ENCODE measurements at regions of chr14 and their contacts with region 1.

Region 1: GRCh38 chr14:100900837-100901390 is 2.6 kb downstream of the RTL1 start:
- DNase-seq: peak; percentile 81
- H3K4me3 ChIP-seq: peak overlapping the region in 1 of 2 experiments; percentile 48; a peak in 2 of 4 replicates
- H3K27ac ChIP-seq: peak overlapping the region in 1 of 2 experiments; percentile 99; a peak in 2 of 4 replicates
- H3K4me1 ChIP-seq: peaks cover 0 to 79% of the 10 kb centered on the region in 2 experiments; a peak in 3 of 4 replicates
- H3K27me3 ChIP-seq: peaks cover 6% of the 10 kb centered on the region; the same call in 1 of the 2 replicates
- CTCF ChIP-seq: peak; percentile 46
- EP300 ChIP-seq: no peak
- RAD21 ChIP-seq: peak; percentile 88

Region 2: GRCh38 chr14:100422556-100423404 is 478.1 kb before region 1 on chr14:
- CTCF ChIA-PET with region 1: interaction called, 11 read pairs
- POLR2A ChIA-PET with region 1: interaction called, 14 read pairs
- DNase-seq: no peak
- H3K4me3 ChIP-seq: no peak overlapping the region
- H3K27ac ChIP-seq: peak overlapping the region; percentile 82 to 100
- H3K4me1 ChIP-seq: peaks cover 26 to 81% of the 10 kb centered on the region in 2 experiments
- H3K27me3 ChIP-seq: no peaks in the 10 kb centered on the region
- CTCF ChIP-seq: no peak
- EP300 ChIP-seq: peak in 1 of 2 experiments; percentile 45; a peak in 1 of 4 replicates
- RAD21 ChIP-seq: no peak

Region 3: DNA sequence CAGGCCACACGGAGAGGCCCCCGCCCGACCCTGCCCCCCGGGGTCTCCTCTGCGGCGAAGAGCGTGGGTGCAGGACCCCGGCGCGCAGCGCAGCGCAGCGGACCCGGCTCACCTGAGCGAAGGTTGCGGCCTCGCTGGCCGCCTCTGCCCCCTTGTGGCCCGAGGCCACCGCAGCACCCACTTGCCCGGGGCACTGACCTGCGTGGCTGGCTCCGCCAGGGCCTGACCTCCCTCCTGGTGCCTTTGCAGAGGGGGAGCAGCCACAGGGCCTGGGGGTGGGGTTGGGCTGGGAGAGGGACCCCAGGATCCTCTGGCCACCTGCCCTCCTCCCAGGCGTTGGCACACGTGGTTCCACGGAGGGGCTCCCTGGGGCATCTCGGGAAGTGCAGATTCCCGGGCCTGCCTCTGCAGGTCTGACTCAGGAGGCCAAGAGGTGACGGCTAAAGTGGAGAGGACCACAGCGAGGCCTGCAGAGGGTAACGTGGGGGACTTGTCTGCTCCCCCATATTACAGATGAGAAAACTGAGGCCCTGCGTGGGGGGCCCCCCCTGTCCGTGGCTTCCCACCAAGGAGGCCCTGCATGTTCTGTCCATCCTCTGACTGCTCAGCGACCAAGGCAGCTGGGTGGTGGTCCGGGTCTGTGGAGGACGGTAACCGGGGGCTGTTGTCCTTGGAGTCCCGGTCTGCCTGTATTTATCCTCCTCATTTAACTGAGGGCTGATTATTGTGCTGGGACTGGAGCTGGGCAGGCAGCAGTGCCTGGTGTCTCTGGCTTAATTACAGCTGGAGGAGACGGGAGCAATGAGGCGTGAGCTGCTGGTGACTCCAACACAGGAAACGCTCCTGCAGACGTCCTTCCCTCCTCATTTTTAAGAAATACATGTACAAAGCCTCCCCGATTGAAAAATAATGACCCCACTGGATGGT is 245.8 kb before region 1 on chr14:
- CTCF ChIA-PET with region 1: interaction called, 33 read pairs
- POLR2A ChIA-PET with region 1: interaction called, 3 read pairs
- DNase-seq: peak; percentile 84
- H3K4me3 ChIP-seq: no peak overlapping the region
- H3K27ac ChIP-seq: peak overlapping the region in 1 of 2 experiments; percentile 92; a peak in 2 of 4 replicates
- H3K4me1 ChIP-seq: peaks cover 0 to 75% of the 10 kb centered on the region in 2 experiments; a peak in 2 of 4 replicates
- H3K27me3 ChIP-seq: no peaks in the 10 kb centered on the region
- CTCF ChIP-seq: peak; percentile 59
- EP300 ChIP-seq: no peak
- RAD21 ChIP-seq: peak; percentile 58

Region 4: GRCh38 chr14:100726550-100727085 is 174.3 kb before region 1 on chr14 and contains the start of gene DLK1:
- CTCF ChIA-PET with region 1: interaction called, 16 read pairs
- POLR2A ChIA-PET with region 1: interaction called, 18 read pairs
- DNase-seq: peak; percentile 91
- H3K4me3 ChIP-seq: peak within 1 kb of the TSS in 1 of 2 experiments; percentile 58; a peak in 2 of 4 replicates
- H3K27ac ChIP-seq: peak within 1 kb of the TSS in 1 of 2 experiments; percentile 91; a peak in 2 of 4 replicates
- H3K4me1 ChIP-seq: peaks cover 0 to 79% of the 10 kb centered on the region in 2 experiments; a peak in 1 of 4 replicates
- H3K27me3 ChIP-seq: peaks cover 23% of the 10 kb centered on the region; the same call in 1 of the 2 replicates
- CTCF ChIP-seq: no peak
- EP300 ChIP-seq: no peak
- RAD21 ChIP-seq: no peak
- polyA plus RNA-seq, gene DLK1: 1.2 and 1.7 TPM in 2 replicates

Region 5: GRCh38 chr14:100783630-100784370 is 117.1 kb before region 1 on chr14:
- CTCF ChIA-PET with region 1: interaction called, 12 read pairs
- POLR2A ChIA-PET with region 1: interaction called, 77 read pairs
- DNase-seq: peak; percentile 84
- H3K4me3 ChIP-seq: no peak overlapping the region
- H3K27ac ChIP-seq: peak overlapping the region in 1 of 2 experiments; percentile 100; a peak in 2 of 4 replicates
- H3K4me1 ChIP-seq: peaks cover 0 to 87% of the 10 kb centered on the region in 2 experiments; a peak in 1 of 4 replicates
- H3K27me3 ChIP-seq: no peaks in the 10 kb centered on the region
- CTCF ChIP-seq: no peak
- EP300 ChIP-seq: peak in 1 of 2 experiments; percentile 98; a peak in 2 of 4 replicates
- RAD21 ChIP-seq: peak; percentile 23

Region 6: DNA sequence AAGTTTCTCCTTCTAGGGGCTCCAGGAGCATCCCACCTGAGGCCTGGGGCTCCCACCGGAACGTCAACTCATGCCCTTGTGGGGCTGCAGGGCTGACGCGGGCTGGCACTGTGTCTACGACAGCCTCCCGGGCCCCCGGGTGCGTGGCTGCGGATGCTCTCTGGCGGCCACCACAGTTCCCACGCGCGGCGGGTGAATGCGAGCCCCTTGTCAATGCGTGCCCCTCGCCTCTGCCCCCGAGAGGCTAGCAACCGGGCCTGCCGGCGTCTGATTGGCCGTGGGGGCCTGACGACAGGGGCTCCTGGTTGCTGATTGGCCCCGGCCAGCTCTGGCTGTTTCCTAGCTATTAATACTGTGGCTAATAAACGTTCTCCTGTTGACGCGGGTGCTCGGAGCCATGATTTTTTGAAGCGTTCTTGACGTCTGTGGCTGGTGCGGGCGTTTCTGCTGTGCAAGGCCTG is 76.8 kb before region 1 on chr14:
- CTCF ChIA-PET with region 1: no interaction called
- POLR2A ChIA-PET with region 1: no interaction called
- DNase-seq: peak; percentile 68
- H3K4me3 ChIP-seq: no peak overlapping the region
- H3K27ac ChIP-seq: no peak overlapping the region; a peak in 1 of 4 replicates
- H3K4me1 ChIP-seq: peaks cover 0 to 11% of the 10 kb centered on the region in 2 experiments; a peak in 2 of 4 replicates
- H3K27me3 ChIP-seq: no peaks in the 10 kb centered on the region
- CTCF ChIP-seq: no peak
- EP300 ChIP-seq: no peak
- RAD21 ChIP-seq: no peak

Region 7: DNA sequence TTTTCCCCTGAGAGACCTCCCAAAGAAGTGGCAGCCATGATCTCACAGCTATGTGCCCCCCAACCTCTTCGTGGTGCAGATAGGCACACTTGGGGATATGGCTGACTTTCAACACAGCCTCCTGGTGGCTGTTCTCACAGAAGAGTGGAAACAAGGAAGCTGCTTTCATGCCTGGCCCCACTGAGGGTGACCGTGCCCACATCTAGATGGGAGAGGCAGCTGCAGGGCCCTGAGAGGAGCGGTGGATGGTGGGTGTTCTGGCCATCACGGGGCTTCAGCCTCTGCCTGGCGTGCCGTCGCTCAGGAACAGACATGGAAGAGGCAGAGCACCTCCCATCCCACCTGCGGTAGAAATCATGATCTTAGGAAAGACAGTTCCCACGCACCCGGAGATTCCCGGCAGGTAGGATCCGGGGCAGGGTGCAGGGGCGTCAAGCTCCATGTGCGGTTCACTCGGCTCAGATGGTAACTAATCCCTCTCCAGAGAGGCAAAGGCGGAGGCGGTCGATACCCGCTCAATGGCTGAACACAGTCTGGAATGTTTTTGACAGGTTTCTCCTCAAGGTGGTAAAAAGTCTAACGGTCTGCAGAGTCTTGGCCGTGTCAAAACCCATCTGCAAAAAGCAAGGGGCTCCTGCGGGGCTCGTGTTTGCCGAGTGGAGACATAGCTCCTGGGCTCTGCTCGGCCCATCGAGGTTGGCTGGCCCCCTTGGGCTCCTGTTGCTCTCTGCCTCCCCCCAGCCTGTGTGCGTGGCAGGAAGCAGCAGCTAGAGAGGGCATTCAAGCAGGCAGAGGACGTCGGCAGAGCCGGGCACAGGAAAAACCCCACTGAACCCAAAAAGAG is 227.8 kb after region 1 on chr14:
- CTCF ChIA-PET with region 1: interaction called, 5 read pairs
- POLR2A ChIA-PET with region 1: interaction called, 21 read pairs
- DNase-seq: peak; percentile 20
- H3K4me3 ChIP-seq: no peak overlapping the region
- H3K27ac ChIP-seq: peak overlapping the region in 1 of 2 experiments; percentile 98; a peak in 2 of 4 replicates
- H3K4me1 ChIP-seq: peaks cover 0 to 83% of the 10 kb centered on the region in 2 experiments; a peak in 2 of 4 replicates
- H3K27me3 ChIP-seq: no peaks in the 10 kb centered on the region
- CTCF ChIP-seq: no peak
- EP300 ChIP-seq: no peak
- RAD21 ChIP-seq: no peak

Region 8: DNA sequence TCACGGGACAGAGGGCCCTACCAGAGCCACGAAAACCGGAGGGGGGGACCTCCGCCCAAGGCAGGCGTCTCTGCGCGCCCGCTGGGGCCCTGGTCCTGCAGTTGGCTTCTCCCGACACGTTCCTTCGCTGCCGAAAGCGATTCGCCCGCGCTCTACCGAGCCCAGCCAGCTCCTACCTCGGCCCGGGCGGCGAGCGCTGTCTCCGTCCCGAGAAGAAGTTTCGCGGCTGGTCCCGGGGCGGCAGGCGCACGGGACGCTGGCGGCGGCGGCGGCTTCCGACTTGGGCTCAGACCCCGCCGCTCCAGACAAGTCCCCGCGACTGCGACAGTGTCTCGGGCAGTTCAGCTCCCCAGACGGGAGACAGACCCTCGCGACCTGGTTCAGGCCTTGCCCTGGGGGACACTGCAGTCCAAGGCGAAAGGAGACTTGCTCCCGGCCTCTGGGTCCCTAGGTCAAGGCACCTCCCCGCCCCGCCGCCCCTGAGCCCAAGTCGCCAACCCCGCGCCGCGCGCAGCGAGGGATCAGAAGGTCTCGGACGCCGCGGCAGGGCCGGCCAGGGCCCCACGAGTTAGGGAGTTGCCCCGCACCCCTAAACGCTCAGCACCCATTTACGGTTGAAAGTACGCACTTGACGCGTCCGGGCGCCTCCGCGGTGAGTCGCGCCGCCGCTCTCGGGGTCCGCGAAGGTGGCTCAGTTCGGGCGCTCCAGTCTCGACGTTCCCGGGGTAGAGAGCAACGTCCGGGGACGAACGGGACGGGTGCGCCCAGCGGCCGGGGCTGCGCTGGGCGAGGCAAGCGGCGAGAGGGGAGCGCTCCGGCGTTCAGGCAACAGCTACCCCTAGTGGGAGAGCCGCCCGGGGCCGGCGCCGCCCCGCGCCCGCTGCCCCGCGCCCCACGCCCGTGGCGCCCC is 659.0 kb after region 1 on chr14:
- CTCF ChIA-PET with region 1: interaction called, 3 read pairs
- POLR2A ChIA-PET with region 1: interaction called, 11 read pairs
- DNase-seq: peak; percentile 91
- H3K4me3 ChIP-seq: peak overlapping the region in 1 of 2 experiments; percentile 43; a peak in 1 of 4 replicates
- H3K27ac ChIP-seq: no peak overlapping the region; a peak in 1 of 4 replicates
- H3K4me1 ChIP-seq: peaks cover 0 to 38% of the 10 kb centered on the region in 2 experiments; a peak in 1 of 4 replicates
- H3K27me3 ChIP-seq: no peaks in the 10 kb centered on the region
- CTCF ChIP-seq: no peak
- EP300 ChIP-seq: no peak
- RAD21 ChIP-seq: peak; percentile 37; the same call in 1 of the 2 replicates